Calu3 (cell line): ENCODE measurements at regions of chr5 and their contacts with region 1.

Region 1: DNA sequence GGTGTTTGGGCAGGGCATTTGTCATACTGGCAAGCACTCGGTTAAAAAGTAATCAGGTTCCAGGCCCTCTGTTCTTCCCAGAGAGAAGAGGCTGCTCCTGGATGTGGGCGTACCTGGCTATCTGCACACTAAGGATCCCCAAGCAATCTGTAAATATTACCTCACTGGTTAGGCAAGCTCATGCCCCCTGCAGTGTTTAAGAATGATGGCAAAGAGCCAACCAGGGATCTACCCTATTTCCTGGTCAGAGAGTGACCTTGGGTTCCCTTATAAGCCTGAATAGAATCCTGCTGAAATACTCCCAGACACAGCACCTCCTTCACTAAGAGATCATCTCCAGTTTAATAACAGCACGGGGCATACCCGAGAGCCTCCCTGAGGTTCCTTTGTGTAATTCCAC is 181.2 kb downstream of the PIK3R1 start:
- DNase-seq: peak; percentile 80
- H3K4me3 Mint-ChIP-seq: peak overlapping the region; percentile 61
- H3K27ac Mint-ChIP-seq: peak overlapping the region; percentile 92
- H3K4me1 Mint-ChIP-seq: peaks cover 28% of the 10 kb centered on the region
- H3K27me3 Mint-ChIP-seq: no peaks in the 10 kb centered on the region
- CTCF ChIP-seq: no peak

Region 2: GRCh38 chr5:68331192-68332079 is 65.3 kb before region 1 on chr5:
- CTCF ChIA-PET with region 1: no interaction called
- intact Hi-C with region 1: loop called (anchors 10 kb)
- DNase-seq: no peak
- H3K4me3 Mint-ChIP-seq: no peak overlapping the region
- H3K27ac Mint-ChIP-seq: no peak overlapping the region
- H3K4me1 Mint-ChIP-seq: peaks cover 27% of the 10 kb centered on the region
- H3K27me3 Mint-ChIP-seq: no peaks in the 10 kb centered on the region
- CTCF ChIP-seq: no peak

Region 3: DNA sequence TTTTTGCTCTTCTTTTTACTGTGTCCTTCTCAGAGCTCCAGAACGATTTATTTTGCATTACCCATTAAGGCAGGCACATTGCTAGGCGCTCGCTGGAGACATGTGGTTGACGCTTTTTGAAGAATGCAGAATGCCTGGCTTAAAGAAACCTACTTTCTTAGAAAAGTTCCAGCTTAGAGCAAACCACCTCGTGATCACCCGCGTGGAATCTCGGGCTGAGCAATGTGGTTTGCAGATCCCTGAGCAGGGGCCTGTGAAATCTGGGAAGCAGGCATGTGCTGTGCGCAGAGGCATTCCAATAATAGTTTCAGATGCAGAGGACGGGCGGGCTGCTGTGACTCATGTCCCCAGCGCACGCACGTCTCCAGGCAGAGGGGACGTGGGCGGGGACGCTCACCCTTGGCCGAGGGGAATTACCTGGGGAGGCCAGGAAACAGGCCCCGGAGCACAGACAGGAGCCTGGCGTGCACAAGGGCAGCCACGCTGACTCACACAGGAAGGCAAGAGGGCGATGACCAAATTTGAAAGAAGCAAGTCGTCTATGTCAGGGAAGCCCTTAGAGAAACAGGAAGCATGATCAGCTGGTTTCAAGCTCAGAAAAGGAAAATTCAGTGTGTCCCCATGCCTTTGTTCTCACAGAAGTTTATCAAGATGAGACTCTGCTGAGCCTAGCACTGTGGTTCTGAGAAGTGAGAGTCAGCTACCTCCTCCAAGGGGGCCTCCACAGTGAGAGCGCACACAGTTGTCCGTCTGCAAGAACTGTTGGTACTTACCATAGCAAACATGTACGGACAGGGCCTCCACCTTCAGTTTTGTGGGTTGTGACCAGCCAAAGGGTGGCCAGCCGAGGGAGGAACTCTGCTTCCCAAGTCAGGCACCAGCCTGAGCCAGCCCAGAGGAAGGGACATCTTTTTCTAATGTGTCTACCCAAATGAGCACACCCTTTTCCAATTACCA is 37.5 kb after region 1 on chr5:
- CTCF ChIA-PET with region 1: interaction called, 5 read pairs
- intact Hi-C with region 1: loop called (anchors 1 kb)
- DNase-seq: peak; percentile 97
- H3K4me3 Mint-ChIP-seq: peak overlapping the region; percentile 27
- H3K27ac Mint-ChIP-seq: peak overlapping the region; percentile 88
- H3K4me1 Mint-ChIP-seq: peaks cover 50% of the 10 kb centered on the region
- H3K27me3 Mint-ChIP-seq: no peaks in the 10 kb centered on the region
- CTCF ChIP-seq: no peak

Region 4: DNA sequence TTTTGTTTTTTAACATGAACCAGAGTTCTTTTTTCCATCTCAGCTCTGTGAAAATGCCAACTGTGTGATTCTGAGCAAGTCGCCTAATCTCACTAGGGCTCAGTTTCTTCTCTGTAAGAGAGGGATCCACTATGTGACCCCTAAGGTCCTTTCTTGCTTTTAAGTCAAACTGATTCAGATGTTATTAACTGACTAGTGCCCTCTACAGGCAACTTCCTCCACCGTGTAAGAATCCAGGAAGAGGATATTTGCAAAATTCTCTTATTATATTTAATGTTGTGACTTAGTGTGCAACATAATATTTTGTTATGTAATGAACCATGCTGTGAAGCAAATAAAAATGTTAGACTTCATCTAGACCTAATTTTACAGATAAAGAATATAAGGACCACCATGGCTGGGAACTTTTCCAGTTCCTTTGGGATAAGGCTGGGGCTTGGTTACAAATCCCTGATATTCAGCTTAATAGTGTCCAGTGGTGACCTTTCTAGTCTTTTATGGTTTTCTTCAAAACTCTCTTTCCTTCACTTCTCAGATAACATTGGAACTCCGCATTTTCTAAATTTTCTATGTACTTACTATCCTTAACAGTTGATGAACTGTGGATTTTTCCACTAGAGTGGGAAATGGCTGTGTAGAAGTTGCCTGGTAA is 63.6 kb after region 1 on chr5:
- CTCF ChIA-PET with region 1: interaction called, 3 read pairs
- intact Hi-C with region 1: loop called (anchors 1 kb)
- DNase-seq: peak; percentile 52
- H3K4me3 Mint-ChIP-seq: no peak overlapping the region
- H3K27ac Mint-ChIP-seq: no peak overlapping the region
- H3K4me1 Mint-ChIP-seq: peaks cover 49% of the 10 kb centered on the region
- H3K27me3 Mint-ChIP-seq: no peaks in the 10 kb centered on the region
- CTCF ChIP-seq: peak; percentile 24